ENCODE measurements at regions of chr12 and their contacts with region 1.

Region 1: GRCh38 chr12:86233126-86233525 is 23.1 kb downstream of the MGAT4C start:
- DNase-seq: no peak
- H3K4me3 Mint-ChIP-seq: no peak overlapping the region
- H3K27ac Mint-ChIP-seq: no peak overlapping the region
- H3K4me1 Mint-ChIP-seq: no peaks in the 10 kb centered on the region
- H3K27me3 Mint-ChIP-seq: no peaks in the 10 kb centered on the region

Region 2: GRCh38 chr12:86265343-86265695 is 32.2 kb after region 1 on chr12:
- intact Hi-C with region 1: loop called (anchors 1 kb)
- DNase-seq: no peak
- H3K4me3 Mint-ChIP-seq: no peak overlapping the region
- H3K27ac Mint-ChIP-seq: no peak overlapping the region
- H3K4me1 Mint-ChIP-seq: no peaks in the 10 kb centered on the region
- H3K27me3 Mint-ChIP-seq: no peaks in the 10 kb centered on the region

Measured in activated T-helper 2 cell treated with anti-CD3 and anti-CD28 coated beads, Interferon-gamma antibody, Interleukin-2, Interleukin-4, amounts not matched to agents 10 μg/mL and 5 μg/mL and 100 μg/mL, durations not matched to agents 14 hours and 24 hours and 36 hours (primary cell).